Activated CD8-positive, alpha-beta T cell treated with anti-CD3 and anti-CD28 coated beads, Interleukin-2, amount 10 ng/mL, durations not matched to agents 7 days and 5 days (primary cell): ENCODE measurements at regions of chr11 and their contacts with region 1.

Region 1: GRCh38 chr11:62665075-62665598 is at the starts of genes C11orf98 and CSKMT:
- DNase-seq: peak; percentile 97
- ATAC-seq: peak; percentile 93
- H3K4me3 Mint-ChIP-seq: peak within 1 kb of the TSS; percentile 98
- H3K27ac Mint-ChIP-seq: peak within 1 kb of the TSS; percentile 93
- H3K4me1 Mint-ChIP-seq: peaks cover 38% of the 10 kb centered on the region
- H3K27me3 Mint-ChIP-seq: no peaks in the 10 kb centered on the region
- total RNA-seq, gene C11orf98: 131 to 133 TPM
- total RNA-seq, gene CSKMT: 21.9 to 22.8 TPM

Region 2: GRCh38 chr11:62612366-62613290 is 52.5 kb before region 1 on chr11 and contains the starts of genes EML3 and ROM1:
- CTCF ChIA-PET with region 1: interaction called, 8 read pairs
- POLR2A ChIA-PET with region 1: interaction called, 12 read pairs
- DNase-seq: peak; percentile 92
- ATAC-seq: peak; percentile 78
- H3K4me3 Mint-ChIP-seq: peak within 1 kb of the TSS; percentile 88
- H3K27ac Mint-ChIP-seq: peak within 1 kb of the TSS; percentile 96
- H3K4me1 Mint-ChIP-seq: peaks cover 56% of the 10 kb centered on the region
- H3K27me3 Mint-ChIP-seq: no peaks in the 10 kb centered on the region
- total RNA-seq, gene EML3: 120 to 144 TPM
- total RNA-seq, gene ROM1: 1.3 to 2.0 TPM

Region 3: GRCh38 chr11:62645956-62646824 is 18.9 kb before region 1 on chr11 and contains the start of gene GANAB:
- CTCF ChIA-PET with region 1: interaction called, 5 read pairs
- POLR2A ChIA-PET with region 1: interaction called, 76 read pairs
- DNase-seq: peak; percentile 100
- ATAC-seq: peak; percentile 98
- H3K4me3 Mint-ChIP-seq: peak within 1 kb of the TSS; percentile 99
- H3K27ac Mint-ChIP-seq: peak within 1 kb of the TSS; percentile 96
- H3K4me1 Mint-ChIP-seq: peaks cover 32% of the 10 kb centered on the region
- H3K27me3 Mint-ChIP-seq: no peaks in the 10 kb centered on the region
- total RNA-seq, gene GANAB: 297 to 310 TPM

Region 4: GRCh38 chr11:62678770-62679696 is 13.9 kb after region 1 on chr11 and contains the start of gene UBXN1:
- CTCF ChIA-PET with region 1: interaction called, 13 read pairs
- POLR2A ChIA-PET with region 1: interaction called, 32 read pairs
- DNase-seq: peak; percentile 89
- ATAC-seq: peak; percentile 88
- H3K4me3 Mint-ChIP-seq: peak within 1 kb of the TSS; percentile 92
- H3K27ac Mint-ChIP-seq: peak within 1 kb of the TSS; percentile 87
- H3K4me1 Mint-ChIP-seq: peaks cover 42% of the 10 kb centered on the region
- H3K27me3 Mint-ChIP-seq: no peaks in the 10 kb centered on the region
- total RNA-seq, gene UBXN1: 107 to 118 TPM

Region 5: DNA sequence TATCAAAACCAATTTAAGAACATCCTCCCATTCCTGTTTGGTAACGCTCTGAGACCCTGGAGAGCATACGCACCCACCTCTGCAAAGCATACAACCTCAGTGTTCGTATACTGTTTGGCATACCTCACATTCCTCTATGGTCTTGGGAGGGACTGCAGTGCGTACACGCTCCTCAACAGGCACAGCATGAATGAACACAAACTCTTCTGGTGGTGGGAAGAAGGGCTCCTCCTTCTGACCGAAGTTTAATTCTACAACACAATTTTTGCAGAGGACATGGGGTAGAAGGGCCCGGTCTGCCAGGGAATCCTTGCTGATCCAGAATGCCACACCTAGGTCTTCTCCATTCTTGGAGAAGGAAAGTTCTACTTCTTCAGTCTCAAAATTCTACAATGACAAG is 56.9 kb after region 1 on chr11:
- CTCF ChIA-PET with region 1: interaction called, 5 read pairs
- POLR2A ChIA-PET with region 1: interaction called, 19 read pairs
- DNase-seq: no peak
- ATAC-seq: no peak
- H3K4me3 Mint-ChIP-seq: no peak overlapping the region
- H3K27ac Mint-ChIP-seq: no peak overlapping the region
- H3K4me1 Mint-ChIP-seq: peaks cover 65% of the 10 kb centered on the region
- H3K27me3 Mint-ChIP-seq: no peaks in the 10 kb centered on the region

Region 6: DNA sequence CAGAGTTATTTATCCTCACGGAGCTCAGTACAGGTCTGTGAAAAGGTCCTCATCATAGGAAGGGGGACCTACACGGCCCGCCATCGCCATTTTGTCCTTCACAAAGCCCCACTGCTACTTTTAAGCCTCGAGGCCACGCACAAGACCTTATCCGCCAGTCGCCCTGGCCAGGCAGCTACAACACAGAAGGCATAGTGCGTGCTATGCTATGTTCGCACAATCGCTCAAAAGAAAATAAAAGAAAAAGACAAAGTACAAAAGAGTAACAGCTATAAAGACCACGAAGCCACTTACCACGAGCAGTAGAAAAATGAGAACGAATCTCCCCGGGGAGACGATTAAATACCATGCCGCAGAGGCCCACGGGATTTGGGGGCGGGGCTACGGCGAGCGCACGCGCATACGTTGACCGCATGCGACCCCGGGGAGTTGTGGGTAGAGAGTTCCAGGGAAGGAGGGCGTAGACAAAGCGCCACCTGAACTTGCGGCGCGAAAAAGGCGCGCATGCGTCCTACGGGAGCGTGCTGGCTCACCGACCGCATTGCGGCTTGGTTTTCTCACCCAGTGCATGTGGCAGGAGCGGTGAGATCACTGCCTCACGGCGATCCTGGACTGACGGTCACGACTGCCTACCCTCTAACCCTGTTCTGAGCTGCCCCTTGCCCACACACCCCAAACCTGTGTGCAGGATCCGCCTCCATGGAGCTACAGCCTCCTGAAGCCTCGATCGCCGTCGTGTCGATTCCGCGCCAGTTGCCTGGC is 190.6 kb after region 1 on chr11:
- CTCF ChIA-PET with region 1: no interaction called
- POLR2A ChIA-PET with region 1: interaction called, 21 read pairs
- DNase-seq: peak; percentile 99
- ATAC-seq: peak; percentile 85
- H3K4me3 Mint-ChIP-seq: peak overlapping the region; percentile 99
- H3K27ac Mint-ChIP-seq: peak overlapping the region; percentile 98
- H3K4me1 Mint-ChIP-seq: peaks cover 69% of the 10 kb centered on the region
- H3K27me3 Mint-ChIP-seq: no peaks in the 10 kb centered on the region